IMR-90 (cell line): ENCODE measurements at regions of chr9 and their contacts with region 1.

Region 1: DNA sequence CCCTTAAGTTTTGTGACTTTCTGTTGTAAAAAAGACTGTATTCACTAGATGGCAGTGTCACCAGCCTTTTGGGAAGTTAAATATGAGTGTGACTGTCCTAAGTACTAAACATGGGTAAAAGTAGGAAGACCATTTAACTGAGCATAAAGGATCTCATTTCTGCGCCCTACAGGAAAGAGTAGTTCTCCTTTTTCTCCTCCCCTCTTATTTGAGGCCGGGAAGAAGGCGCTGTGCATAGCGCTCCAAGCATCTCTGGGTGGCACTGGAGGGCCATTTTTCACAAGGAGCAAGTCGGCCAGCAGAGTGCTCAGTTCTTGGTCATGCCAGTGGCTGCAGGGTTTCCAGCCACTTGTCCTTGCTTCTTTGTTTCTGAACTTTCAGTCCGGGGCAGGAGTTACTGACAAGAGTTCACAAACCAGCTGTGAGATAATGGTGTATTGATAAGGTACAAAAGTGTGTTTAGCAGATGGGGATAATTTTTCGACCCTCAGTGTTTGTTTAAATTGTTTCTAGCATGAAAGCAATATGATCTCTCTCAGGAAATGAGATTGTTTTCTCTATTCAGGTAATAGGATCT is 227.6 kb upstream of the DMRT1 start:
- DNase-seq: peak; percentile 91
- ATAC-seq: peak; percentile 97
- H3K4me3 ChIP-seq: no peak overlapping the region
- H3K27ac ChIP-seq: no peak overlapping the region
- H3K4me1 ChIP-seq: peaks cover 3% of the 10 kb centered on the region
- H3K27me3 ChIP-seq: no peaks in the 10 kb centered on the region
- CTCF ChIP-seq: peak; percentile 95
- POLR2A ChIP-seq: peak; percentile 48
- RAD21 ChIP-seq: peak; percentile 93

Region 2: GRCh38 chr9:706606-707459 is 93.0 kb after region 1 on chr9:
- CTCF ChIA-PET with region 1: no interaction called
- POLR2A ChIA-PET with region 1: no interaction called
- dilution Hi-C with region 1: no loop called
- in situ Hi-C with region 1: no loop called
- intact Hi-C with region 1: loop called (anchors 2 kb)
- DNase-seq: peak; percentile 75
- ATAC-seq: peak; percentile 92
- H3K4me3 ChIP-seq: peak overlapping the region; percentile 58
- H3K27ac ChIP-seq: peak overlapping the region; percentile 98
- H3K4me1 ChIP-seq: peaks cover 8% of the 10 kb centered on the region
- H3K27me3 ChIP-seq: no peaks in the 10 kb centered on the region
- CTCF ChIP-seq: no peak
- POLR2A ChIP-seq: no peak
- RAD21 ChIP-seq: no peak; the same call in 1 of the 2 replicates

Region 3: GRCh38 chr9:757246-757881 is 143.5 kb after region 1 on chr9:
- CTCF ChIA-PET with region 1: interaction called, 10 read pairs
- POLR2A ChIA-PET with region 1: no interaction called
- dilution Hi-C with region 1: no loop called
- in situ Hi-C with region 1: loop called (anchors 5 kb)
- intact Hi-C with region 1: loop called (anchors 1 kb)
- DNase-seq: peak; percentile 67
- ATAC-seq: peak; percentile 84
- H3K4me3 ChIP-seq: no peak overlapping the region
- H3K27ac ChIP-seq: no peak overlapping the region
- H3K4me1 ChIP-seq: peaks cover 9% of the 10 kb centered on the region
- H3K27me3 ChIP-seq: no peaks in the 10 kb centered on the region
- CTCF ChIP-seq: peak; percentile 64
- POLR2A ChIP-seq: no peak
- RAD21 ChIP-seq: peak; percentile 79

Region 4: GRCh38 chr9:806285-807156 is 192.7 kb after region 1 on chr9:
- CTCF ChIA-PET with region 1: interaction called, 8 read pairs
- POLR2A ChIA-PET with region 1: no interaction called
- dilution Hi-C with region 1: no loop called
- in situ Hi-C with region 1: loop called (anchors 5 kb)
- intact Hi-C with region 1: loop called (anchors 1 kb)
- DNase-seq: peak; percentile 51
- ATAC-seq: peak; percentile 37; the same call in 1 of the 2 replicates
- H3K4me3 ChIP-seq: no peak overlapping the region
- H3K27ac ChIP-seq: no peak overlapping the region
- H3K4me1 ChIP-seq: peaks cover 8% of the 10 kb centered on the region
- H3K27me3 ChIP-seq: no peaks in the 10 kb centered on the region
- CTCF ChIP-seq: peak; percentile 92
- POLR2A ChIP-seq: no peak
- RAD21 ChIP-seq: peak; percentile 88

Region 5: DNA sequence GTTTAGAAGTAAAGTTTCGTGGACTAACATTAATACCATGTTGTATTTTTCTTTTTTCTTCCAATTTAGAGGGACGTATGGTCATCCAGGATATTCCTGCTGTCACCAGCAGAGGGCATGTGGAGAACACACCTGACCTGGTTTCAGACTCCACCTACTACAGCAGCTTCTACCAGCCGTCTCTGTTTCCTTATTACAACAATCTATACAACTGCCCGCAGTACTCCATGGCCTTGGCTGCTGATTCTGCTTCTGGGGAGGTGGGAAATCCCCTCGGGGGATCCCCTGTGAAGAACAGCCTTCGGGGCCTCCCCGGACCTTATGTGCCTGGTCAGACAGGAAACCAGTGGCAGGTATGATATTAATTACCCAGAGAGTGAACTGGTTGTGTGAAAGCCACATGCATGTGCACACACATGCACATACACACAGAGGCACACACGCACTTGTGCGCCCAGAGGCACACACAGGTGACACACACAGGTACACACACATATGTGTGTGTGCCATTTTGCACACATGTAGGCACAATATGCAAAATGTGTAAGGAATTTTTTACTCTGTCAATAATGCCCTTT is 280.1 kb after region 1 on chr9:
- CTCF ChIA-PET with region 1: interaction called, 3 read pairs
- POLR2A ChIA-PET with region 1: no interaction called
- dilution Hi-C with region 1: no loop called
- in situ Hi-C with region 1: no loop called
- intact Hi-C with region 1: loop called (anchors 10 kb)
- DNase-seq: peak; percentile 49
- ATAC-seq: peak; percentile 74
- H3K4me3 ChIP-seq: no peak overlapping the region
- H3K27ac ChIP-seq: no peak overlapping the region
- H3K4me1 ChIP-seq: no peaks in the 10 kb centered on the region
- H3K27me3 ChIP-seq: no peaks in the 10 kb centered on the region; the same call in 1 of the 2 replicates
- CTCF ChIP-seq: peak; percentile 66
- POLR2A ChIP-seq: no peak
- RAD21 ChIP-seq: peak; percentile 63